Activated CD8-positive, alpha-beta T cell treated with anti-CD3 and anti-CD28 coated beads, Interleukin-2, amount 10 ng/mL, durations not matched to agents 7 days and 5 days (primary cell): ENCODE measurements at regions of chr11 and their contacts with region 1.

Region 1: DNA sequence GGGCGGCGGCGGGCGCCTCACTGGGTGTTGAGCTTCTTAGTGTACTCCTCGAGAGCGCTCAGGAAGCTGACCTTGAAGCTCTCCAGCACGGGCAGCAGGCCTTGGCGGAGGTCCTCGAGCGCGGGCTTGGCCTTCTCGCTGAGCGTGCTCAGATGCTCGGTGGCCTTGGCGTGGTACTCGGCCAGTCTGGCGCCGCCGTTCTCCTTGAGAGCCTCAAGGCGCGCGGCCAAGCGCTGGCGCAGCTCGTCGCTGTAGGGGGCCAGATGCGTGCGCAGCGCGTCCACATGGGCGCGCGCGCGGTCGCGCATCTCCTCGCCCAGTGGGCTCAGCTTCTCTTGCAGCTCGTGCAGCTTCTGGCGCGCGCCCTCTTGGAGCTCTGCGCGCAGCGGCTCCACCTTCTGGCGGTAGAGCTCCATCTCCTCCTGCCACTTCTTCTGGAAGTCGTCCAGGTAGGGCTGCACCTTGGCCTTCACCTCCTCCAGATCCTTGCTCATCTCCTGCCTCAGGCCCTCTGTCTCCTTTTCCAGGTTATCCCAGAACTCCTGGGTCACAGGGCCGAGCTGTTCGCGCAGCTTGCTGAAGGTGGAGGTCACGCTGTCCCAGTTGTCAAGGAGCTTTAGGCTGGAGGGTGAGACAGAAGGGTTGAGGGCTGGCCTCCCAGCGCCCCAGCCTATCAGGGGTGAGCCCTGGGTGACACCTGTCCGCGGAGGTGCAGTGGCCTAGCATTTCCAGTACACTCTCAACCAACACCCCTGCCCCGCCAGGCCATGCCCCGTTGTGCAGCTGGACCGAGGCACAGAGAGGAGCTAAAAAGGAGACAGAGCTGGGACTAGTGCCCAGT is 1.4 kb downstream of the APOA1 start:
- DNase-seq: peak; percentile 91
- ATAC-seq: peak; percentile 96
- H3K4me3 Mint-ChIP-seq: peak overlapping the region; percentile 73
- H3K27ac Mint-ChIP-seq: peak overlapping the region; percentile 76
- H3K4me1 Mint-ChIP-seq: peaks cover 20% of the 10 kb centered on the region
- H3K27me3 Mint-ChIP-seq: no peaks in the 10 kb centered on the region

Region 2: GRCh38 chr11:116732271-116733042 is 103.6 kb before region 1 on chr11:
- CTCF ChIA-PET with region 1: interaction called, 23 read pairs
- POLR2A ChIA-PET with region 1: no interaction called
- DNase-seq: peak; percentile 71
- ATAC-seq: peak; percentile 85
- H3K4me3 Mint-ChIP-seq: no peak overlapping the region
- H3K27ac Mint-ChIP-seq: no peak overlapping the region
- H3K4me1 Mint-ChIP-seq: peaks cover 12% of the 10 kb centered on the region
- H3K27me3 Mint-ChIP-seq: no peaks in the 10 kb centered on the region

Region 3: GRCh38 chr11:116813781-116814471 is 22.1 kb before region 1 on chr11:
- CTCF ChIA-PET with region 1: interaction called, 24 read pairs
- POLR2A ChIA-PET with region 1: interaction called, 4 read pairs
- DNase-seq: no peak
- ATAC-seq: no peak
- H3K4me3 Mint-ChIP-seq: no peak overlapping the region
- H3K27ac Mint-ChIP-seq: no peak overlapping the region
- H3K4me1 Mint-ChIP-seq: no peaks in the 10 kb centered on the region
- H3K27me3 Mint-ChIP-seq: peaks cover 3% of the 10 kb centered on the region

Region 4: DNA sequence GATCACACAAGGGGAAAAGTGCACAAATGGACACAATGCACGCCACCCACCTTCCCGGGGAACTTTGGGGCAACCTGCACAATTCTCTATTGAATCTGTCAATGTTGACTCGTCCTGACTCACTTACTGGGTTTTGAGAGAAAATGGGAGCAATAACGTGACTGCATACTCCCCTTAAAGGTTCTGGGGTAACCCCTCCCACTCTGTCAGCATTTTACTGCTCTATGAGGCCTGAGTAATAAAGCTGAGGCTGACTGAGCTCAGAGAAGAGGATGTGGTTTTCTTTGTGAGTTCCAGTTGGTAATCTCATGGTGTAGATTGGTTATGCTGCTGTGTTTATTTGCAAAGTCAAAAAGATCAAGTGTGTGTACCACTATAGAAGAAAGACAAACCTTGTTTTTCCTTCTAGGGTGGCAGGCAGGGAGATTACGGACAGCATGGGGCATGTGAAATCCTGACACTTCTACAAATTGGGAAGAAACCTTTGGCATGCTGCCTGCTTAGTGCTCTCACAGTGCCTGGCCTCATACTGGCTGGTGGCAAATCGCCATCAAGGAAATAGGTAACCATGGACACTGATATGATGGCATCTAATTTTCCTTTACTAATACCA is 17.6 kb after region 1 on chr11:
- CTCF ChIA-PET with region 1: interaction called, 95 read pairs
- POLR2A ChIA-PET with region 1: interaction called, 57 read pairs
- DNase-seq: peak; percentile 83
- ATAC-seq: peak; percentile 95
- H3K4me3 Mint-ChIP-seq: peak overlapping the region; percentile 35
- H3K27ac Mint-ChIP-seq: peak overlapping the region; percentile 93
- H3K4me1 Mint-ChIP-seq: peaks cover 65% of the 10 kb centered on the region
- H3K27me3 Mint-ChIP-seq: no peaks in the 10 kb centered on the region

Region 5: DNA sequence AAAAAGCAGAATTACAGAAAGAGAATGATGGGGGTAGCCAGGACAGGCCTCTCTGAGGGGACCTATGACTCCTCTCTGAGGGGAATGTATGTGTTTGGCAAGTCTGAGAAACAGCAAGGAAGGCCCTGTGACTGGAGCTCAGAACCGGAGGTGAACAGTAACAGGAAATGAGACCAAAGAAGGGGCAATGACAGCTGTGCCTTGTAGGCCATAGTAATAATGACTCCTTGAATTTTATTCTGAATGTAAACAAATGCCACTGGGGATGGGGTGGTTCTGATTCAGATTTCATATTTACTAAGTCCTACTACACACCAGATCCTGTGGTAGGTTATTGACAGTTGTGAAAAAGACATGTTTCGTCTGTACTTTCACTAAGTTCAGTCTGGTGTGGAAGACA is 54.2 kb after region 1 on chr11:
- CTCF ChIA-PET with region 1: interaction called, 16 read pairs
- POLR2A ChIA-PET with region 1: no interaction called
- DNase-seq: peak; percentile 47
- ATAC-seq: peak; percentile 74
- H3K4me3 Mint-ChIP-seq: no peak overlapping the region
- H3K27ac Mint-ChIP-seq: peak overlapping the region; percentile 69
- H3K4me1 Mint-ChIP-seq: peaks cover 16% of the 10 kb centered on the region
- H3K27me3 Mint-ChIP-seq: no peaks in the 10 kb centered on the region

Region 6: GRCh38 chr11:116913000-116913399 is 77.0 kb after region 1 on chr11:
- CTCF ChIA-PET with region 1: no interaction called
- POLR2A ChIA-PET with region 1: no interaction called
- DNase-seq: no peak
- ATAC-seq: no peak
- H3K4me3 Mint-ChIP-seq: no peak overlapping the region
- H3K27ac Mint-ChIP-seq: no peak overlapping the region
- H3K4me1 Mint-ChIP-seq: peaks cover 9% of the 10 kb centered on the region
- H3K27me3 Mint-ChIP-seq: no peaks in the 10 kb centered on the region

Region 7: DNA sequence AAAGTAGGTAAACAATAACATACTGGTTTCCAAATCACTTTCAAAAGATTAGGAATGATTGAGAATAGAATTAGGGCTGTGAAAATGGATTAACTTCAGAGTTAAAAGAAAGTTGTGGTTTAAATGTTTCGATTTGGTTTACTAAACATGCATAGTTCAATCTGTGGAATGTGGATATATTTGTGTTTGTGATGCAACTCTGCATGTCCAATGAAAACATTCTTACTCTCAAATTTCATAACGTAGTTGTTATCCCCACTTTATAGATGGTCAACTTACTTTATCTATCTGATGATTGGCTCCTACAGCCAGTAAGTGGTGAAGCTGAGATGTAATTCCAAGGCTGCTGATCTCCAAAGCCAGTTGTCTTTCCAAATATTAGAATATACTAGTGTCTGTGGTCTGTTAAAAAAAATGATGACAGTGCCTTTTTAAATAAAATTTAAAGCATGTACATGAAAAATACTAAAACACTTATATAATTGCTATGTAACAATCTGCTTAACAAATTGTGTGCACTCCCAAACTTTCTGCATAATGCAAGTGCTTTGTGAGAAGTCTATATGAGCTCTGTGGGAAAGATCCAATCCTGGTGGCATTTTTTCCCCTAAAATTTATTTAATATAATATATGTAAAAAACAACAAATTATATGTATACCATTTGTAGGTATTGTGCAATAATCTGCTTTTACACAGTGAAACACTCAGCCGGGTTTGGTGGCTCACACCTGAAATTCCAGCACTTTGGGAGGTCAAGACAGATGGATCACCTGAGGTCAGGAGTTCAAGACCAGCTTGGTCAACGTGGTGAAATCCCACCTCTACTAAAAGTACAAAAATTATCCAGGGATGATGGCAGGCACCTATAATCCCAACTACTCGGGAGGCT is 271.9 kb after region 1 on chr11:
- CTCF ChIA-PET with region 1: interaction called, 25 read pairs
- POLR2A ChIA-PET with region 1: no interaction called
- DNase-seq: no peak
- ATAC-seq: no peak
- H3K4me3 Mint-ChIP-seq: no peak overlapping the region
- H3K27ac Mint-ChIP-seq: no peak overlapping the region
- H3K4me1 Mint-ChIP-seq: peaks cover 5% of the 10 kb centered on the region
- H3K27me3 Mint-ChIP-seq: peaks cover 2% of the 10 kb centered on the region